HEK293T (cell line): ENCODE measurements at regions of chr20 and their contacts with region 1.

Region 1: DNA sequence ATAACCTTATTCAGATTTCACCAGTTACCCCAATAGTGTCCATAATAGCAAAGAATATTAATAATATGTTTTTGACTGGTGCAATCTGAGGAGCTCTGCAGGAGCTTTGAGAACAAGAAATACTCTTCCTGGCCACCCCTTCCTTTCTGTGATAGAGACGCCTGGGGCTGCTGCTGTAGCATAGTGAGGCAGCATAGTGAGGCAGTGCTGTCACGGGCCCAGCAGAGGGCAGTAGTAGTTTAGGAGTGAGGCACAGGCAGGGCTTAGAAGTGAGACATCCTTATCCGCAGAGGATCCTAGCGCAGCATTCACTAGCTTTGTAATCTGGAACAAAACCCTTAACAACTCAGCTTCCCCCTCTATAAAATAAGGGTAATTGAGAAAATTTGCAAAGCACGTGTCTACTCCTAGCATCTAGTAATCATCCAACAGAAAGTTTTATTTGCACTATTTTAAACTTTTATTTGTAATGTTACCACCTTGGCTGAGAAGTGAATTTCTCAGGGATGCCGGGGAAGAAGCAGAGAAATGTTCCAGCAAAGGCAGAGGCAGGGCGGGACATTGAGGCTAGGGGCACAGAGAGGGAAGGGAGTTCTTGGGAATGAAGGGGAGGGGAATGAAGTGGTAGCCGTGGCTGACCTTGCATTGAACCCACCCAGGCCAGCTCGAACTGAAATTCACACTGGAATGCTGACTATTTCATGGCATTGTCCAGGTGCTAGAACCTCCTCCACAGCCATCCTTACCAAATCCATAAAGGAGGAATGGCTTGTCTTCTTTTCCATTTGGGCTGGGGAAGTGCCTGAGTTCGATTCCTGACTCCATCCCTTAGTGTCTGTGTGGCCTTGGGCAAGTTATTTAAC is 78.8 kb downstream of the CDS2 start:
- DNase-seq: peak; percentile 86

Region 2: GRCh38 chr20:5222919-5223634 is 17.5 kb after region 1 on chr20:
- CTCF ChIA-PET with region 1: interaction called, 20 read pairs
- POLR2A ChIA-PET with region 1: no interaction called
- DNase-seq: peak; percentile 62

Region 3: GRCh38 chr20:5448449-5449118 is 243.0 kb after region 1 on chr20:
- CTCF ChIA-PET with region 1: interaction called, 18 read pairs
- POLR2A ChIA-PET with region 1: no interaction called
- DNase-seq: peak; percentile 57